GM12878 (cell line): ENCODE measurements at regions of chr14 and their contacts with region 1.

Region 1: DNA sequence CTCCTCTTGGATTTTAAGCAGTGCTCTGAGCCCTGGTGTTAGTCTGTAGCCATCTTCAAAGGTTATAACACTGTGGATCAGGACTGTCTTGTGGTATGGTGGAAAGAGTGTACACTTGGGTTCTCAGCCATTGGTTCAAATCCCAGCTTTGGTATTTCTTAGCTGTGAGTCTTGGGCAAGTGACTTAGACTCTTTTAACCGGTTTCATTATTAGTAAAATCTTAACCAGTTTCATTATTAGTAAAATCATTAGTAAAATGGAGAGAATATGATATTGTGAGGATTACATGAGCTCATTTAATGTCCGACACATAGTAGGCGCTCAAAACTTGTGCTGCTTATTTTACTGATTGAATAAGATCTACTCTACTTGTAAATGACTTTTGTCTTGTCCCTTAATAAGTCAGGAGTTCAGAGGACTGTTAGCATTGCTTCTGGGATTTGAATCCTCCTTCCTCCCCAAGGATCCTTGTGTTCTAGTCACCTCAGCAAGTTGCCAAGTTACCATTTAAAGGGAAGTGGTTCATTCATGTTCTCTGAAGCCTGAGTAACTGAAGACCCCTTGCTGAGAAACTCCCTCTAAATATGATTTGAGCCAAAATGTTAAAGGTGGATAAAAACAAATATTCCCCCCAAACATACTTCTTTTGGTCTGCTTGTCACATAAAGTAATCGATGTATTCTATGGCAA is 12.4 kb downstream of the TTLL5 start:
- DNase-seq: peak; percentile 39
- ATAC-seq: peak; percentile 93
- H3K4me3 ChIP-seq: 0 out of 2 replicates have a peak overlapping the region, but pooled peaks have one; percentile 26
- H3K27ac ChIP-seq: no peak overlapping the region
- H3K4me1 ChIP-seq: peaks cover 10% of the 10 kb centered on the region; the same call in 1 of the 2 replicates
- H3K27me3 ChIP-seq: no peaks in the 10 kb centered on the region
- CTCF ChIP-seq: no peak
- EP300 ChIP-seq: peak in 1 of 2 experiments; percentile 32; a peak in 1 of 4 replicates
- POLR2A ChIP-seq: no peak
- RAD21 ChIP-seq: no peak

Region 2: DNA sequence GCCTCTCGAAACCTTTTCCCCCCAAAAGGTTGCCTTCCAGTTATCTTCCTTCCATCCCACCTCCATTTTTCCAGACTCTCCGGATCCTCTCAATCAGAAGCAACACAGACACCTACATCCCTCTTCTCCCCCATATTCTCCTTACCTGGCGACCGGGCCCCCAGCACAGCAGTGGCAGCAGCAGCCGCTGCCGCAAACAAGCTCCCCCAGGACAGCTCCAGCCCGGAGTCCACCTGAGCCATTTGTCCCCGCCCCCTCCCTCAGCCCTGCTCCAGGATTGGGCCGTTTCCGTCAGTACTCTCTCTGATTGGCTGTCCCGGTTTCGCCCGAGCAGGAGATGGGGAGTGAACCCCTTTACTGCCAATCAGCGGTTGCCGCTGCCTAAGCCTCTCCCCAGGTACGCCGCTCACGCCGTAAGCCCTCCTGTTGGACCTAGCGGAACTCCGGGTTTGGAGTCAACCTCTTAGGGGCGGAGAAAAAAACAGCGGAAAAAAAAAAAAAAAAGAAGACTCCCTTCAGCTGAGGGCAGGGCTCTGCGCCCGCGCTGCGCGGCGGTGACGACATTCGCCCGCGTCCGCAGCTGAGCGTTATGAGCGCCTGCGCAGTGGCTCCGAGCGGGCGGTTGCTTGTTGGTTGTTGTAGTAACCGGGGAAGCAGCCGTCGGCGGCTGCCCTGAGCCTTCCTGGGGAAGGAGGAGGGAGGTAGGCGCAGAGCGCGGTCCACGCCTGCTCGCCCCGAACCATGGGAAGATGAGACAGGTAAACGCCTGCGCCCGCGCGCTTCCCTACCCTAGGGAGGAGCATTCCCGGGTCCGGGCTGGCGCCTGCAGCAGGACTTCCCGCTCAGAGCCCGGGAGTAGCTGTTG is 12.6 kb before region 1 on chr14 and contains the starts of genes ERG28 and TTLL5:
- CTCF ChIA-PET with region 1: interaction called, 5 read pairs
- POLR2A ChIA-PET with region 1: interaction called, 18 read pairs
- RAD21 ChIA-PET with region 1: no interaction called
- SMC1A ChIA-PET with region 1: interaction called, 10 read pairs
- in situ Hi-C with region 1: no loop called
- intact Hi-C with region 1: no loop called
- DNase-seq: peak; percentile 99
- ATAC-seq: peak; percentile 99
- H3K4me3 ChIP-seq: peak within 1 kb of the TSS; percentile 89
- H3K27ac ChIP-seq: peak within 1 kb of the TSS; percentile 49
- H3K4me1 ChIP-seq: no peaks in the 10 kb centered on the region
- H3K27me3 ChIP-seq: no peaks in the 10 kb centered on the region
- CTCF ChIP-seq: no peak
- EP300 ChIP-seq: 0 out of 4 replicates have a peak, but pooled peaks of 1 of the 2 experiments have one; percentile 16
- POLR2A ChIP-seq: peak; percentile 82
- RAD21 ChIP-seq: no peak
- polyA plus RNA-seq, gene ERG28: 52.6 to 67.0 TPM
- polyA plus RNA-seq, gene TTLL5: 3.2 to 5.2 TPM